ENCODE measurements at regions of chr11 and their contacts with region 1.

Region 1: GRCh38 chr11:737371-737770 is 9.9 kb upstream of the TALDO1 start:
- DNase-seq: no peak
- H3K4me3 ChIP-seq: no peak overlapping the region
- H3K4me3 Mint-ChIP-seq: peak overlapping the region; percentile 68
- H3K27ac Mint-ChIP-seq: peak overlapping the region; percentile 75
- H3K4me1 ChIP-seq: peaks cover 32% of the 10 kb centered on the region
- H3K4me1 Mint-ChIP-seq: peaks cover 29% of the 10 kb centered on the region
- H3K27me3 ChIP-seq: no peaks in the 10 kb centered on the region
- H3K27me3 Mint-ChIP-seq: no peaks in the 10 kb centered on the region
- CTCF ChIP-seq: no peak

Region 2: DNA sequence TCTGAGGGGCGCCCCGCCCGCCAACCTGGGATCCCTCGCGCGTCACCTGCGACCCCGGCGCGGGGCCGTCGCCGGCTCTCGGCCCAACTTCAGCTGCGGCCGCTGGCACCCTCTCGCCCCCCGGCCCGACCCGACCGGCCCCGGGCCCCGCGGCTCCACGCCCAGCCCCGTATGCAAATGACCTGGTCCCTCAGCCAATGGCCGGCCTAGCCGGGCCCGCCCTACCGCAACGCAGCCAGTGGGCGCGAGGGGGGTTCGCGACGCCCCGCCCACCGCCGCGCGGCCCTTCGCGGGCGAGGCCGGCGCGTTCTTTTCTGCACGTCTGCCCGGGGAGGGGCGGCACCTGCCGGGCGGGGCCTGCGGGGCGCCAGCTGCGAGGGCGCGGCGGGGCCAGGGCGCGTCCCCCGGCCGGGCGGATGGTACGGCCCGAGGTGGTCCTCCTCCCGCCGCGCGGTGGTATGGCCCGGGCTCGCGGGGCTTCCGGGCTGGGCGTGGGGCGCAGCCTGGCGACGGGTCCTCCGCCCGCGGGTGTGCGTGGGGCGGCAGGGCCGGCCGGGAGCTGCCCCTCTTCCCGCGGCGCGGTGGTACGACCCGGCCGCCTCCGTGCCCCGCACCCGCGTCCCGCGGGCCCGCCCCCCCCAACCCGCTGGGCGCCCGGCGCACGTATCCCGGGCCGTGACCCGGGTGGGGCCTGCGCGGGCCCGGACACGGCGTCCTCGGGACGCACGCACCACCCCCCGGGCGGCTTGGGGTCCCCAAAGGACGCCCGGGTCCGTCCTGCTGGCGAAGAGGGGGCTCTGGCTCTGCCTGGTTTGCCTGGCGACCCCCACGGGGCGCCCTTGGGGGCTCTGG is 168.8 kb before region 1 on chr11:
- CTCF ChIA-PET with region 1: no interaction called
- POLR2A ChIA-PET with region 1: no interaction called
- intact Hi-C with region 1: no loop called
- DNase-seq: peak; percentile 95 to 99
- H3K4me3 ChIP-seq: peak overlapping the region; percentile 99
- H3K4me3 Mint-ChIP-seq: peak overlapping the region; percentile 74
- H3K27ac Mint-ChIP-seq: no peak overlapping the region
- H3K4me1 ChIP-seq: peaks cover 54% of the 10 kb centered on the region
- H3K4me1 Mint-ChIP-seq: peaks cover 6% of the 10 kb centered on the region
- H3K27me3 ChIP-seq: no peaks in the 10 kb centered on the region
- H3K27me3 Mint-ChIP-seq: no peaks in the 10 kb centered on the region
- CTCF ChIP-seq: no peak

Region 3: DNA sequence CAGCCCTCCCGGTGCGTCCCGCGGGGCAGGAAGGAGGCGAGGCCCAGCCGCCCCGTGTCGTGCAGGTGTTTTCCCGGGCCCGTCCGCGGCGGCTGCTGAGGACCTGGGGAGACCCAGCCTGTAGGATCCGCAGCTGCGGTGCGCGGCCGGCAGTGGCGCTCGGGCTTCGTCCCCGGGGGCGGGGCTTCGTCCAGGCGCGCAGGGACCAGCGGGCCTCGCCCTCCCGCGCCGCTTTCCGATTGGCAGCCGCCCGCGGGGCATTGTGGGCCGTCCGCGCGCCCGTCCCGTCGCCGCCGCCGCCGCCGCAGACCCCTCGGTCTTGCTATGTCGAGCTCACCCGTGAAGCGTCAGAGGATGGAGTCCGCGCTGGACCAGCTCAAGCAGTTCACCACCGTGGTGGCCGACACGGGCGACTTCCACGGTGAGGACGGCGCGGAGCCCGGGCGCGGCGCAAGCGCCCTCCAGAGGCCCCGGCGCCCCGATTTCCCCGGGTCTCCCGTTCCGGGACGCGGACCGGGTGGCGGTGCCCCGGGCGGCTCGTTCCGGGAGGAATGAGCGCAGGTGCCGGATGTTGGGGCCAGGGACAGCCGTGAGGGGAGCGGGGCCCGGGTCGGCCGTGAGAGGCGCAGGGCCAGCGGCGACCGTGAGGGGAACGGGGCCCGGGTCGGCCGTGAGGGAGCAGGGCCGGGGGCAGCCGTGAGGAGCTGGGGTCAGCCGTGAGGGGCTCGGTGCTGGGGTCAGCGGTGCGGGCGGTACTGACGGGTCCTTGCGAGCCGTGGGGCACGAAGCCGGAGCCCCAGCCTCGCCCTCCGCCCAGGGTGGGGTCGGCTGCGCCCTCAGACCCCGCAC is 10.0 kb after region 1 on chr11 and contains the start of gene TALDO1:
- CTCF ChIA-PET with region 1: no interaction called
- POLR2A ChIA-PET with region 1: interaction called, 5 read pairs
- intact Hi-C with region 1: loop called (anchors 1 kb)
- DNase-seq: peak; percentile 93 to 98
- H3K4me3 ChIP-seq: peak within 1 kb of the TSS; percentile 96
- H3K4me3 Mint-ChIP-seq: peak within 1 kb of the TSS; percentile 93
- H3K27ac Mint-ChIP-seq: peak within 1 kb of the TSS; percentile 81
- H3K4me1 ChIP-seq: peaks cover 29% of the 10 kb centered on the region
- H3K4me1 Mint-ChIP-seq: peaks cover 1% of the 10 kb centered on the region
- H3K27me3 ChIP-seq: no peaks in the 10 kb centered on the region
- H3K27me3 Mint-ChIP-seq: no peaks in the 10 kb centered on the region
- CTCF ChIP-seq: peak in 1 of 2 experiments; percentile 20
- total RNA-seq, gene TALDO1: 293 and 300 TPM in 2 replicates

Region 4: GRCh38 chr11:1017269-1018005 is 280.1 kb after region 1 on chr11:
- CTCF ChIA-PET with region 1: no interaction called
- POLR2A ChIA-PET with region 1: no interaction called
- intact Hi-C with region 1: no loop called
- DNase-seq: no peak
- H3K4me3 ChIP-seq: no peak overlapping the region
- H3K4me3 Mint-ChIP-seq: no peak overlapping the region
- H3K27ac Mint-ChIP-seq: no peak overlapping the region
- H3K4me1 ChIP-seq: no peaks in the 10 kb centered on the region
- H3K4me1 Mint-ChIP-seq: no peaks in the 10 kb centered on the region
- H3K27me3 ChIP-seq: no peaks in the 10 kb centered on the region
- H3K27me3 Mint-ChIP-seq: no peaks in the 10 kb centered on the region
- CTCF ChIP-seq: no peak

Measured in Caco-2 (cell line).